BJ (cell line): ENCODE measurements at regions of chr6 and their contacts with region 1.

Region 1: GRCh38 chr6:132483779-132484679 is 28.9 kb downstream of the STX7 start:
- DNase-seq: no peak
- H3K4me3 ChIP-seq: no peak overlapping the region
- H3K27me3 ChIP-seq: no peaks in the 10 kb centered on the region
- CTCF ChIP-seq: peak; percentile 57

Region 2: DNA sequence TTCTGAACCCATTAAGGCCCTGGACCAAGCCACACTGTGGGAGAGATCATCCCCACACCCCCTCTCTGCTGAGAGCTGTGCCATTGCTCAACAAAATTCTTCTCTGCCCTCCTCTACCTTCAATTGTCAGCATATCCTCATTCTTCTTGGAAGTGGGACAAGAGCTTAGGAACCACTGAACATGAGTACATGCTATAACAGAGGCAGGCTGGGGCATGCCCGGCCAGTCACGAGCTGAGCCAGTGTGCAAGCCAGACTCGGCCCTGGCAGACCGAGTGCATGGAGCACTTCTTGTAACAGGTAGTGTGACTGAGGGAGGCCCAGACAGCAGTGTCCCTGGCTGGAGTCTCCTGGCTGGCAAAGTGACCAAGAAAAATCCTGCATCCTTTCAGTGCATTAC is 231.9 kb before region 1 on chr6:
- CTCF ChIA-PET with region 1: no interaction called
- POLR2A ChIA-PET with region 1: no interaction called
- DNase-seq: no peak
- H3K4me3 ChIP-seq: no peak overlapping the region
- H3K27me3 ChIP-seq: no peaks in the 10 kb centered on the region
- CTCF ChIP-seq: no peak

Region 3: DNA sequence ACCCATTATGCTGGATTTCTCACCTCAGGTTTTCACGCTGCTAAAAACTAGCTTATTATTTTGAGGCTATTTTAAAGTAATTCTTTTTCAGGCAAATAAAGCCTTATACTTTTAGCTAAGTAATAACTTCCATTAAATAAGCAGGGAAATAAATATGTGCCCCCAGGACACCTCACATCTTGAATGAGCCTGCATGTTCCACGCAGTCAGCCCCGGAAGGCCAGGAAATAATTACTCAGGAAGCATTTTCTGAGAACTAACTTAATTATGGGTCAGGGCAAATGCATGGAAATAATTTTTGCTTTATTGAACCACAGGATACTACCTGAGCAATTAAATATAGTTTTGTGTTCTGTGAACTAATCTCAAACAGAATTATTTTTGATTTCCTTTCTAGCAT is 12.2 kb before region 1 on chr6:
- CTCF ChIA-PET with region 1: interaction called, 12 read pairs
- POLR2A ChIA-PET with region 1: no interaction called
- DNase-seq: no peak
- H3K4me3 ChIP-seq: no peak overlapping the region
- H3K27me3 ChIP-seq: no peaks in the 10 kb centered on the region
- CTCF ChIP-seq: no peak

Region 4: GRCh38 chr6:132495604-132496079 is 11.6 kb after region 1 on chr6:
- CTCF ChIA-PET with region 1: interaction called, 19 read pairs
- POLR2A ChIA-PET with region 1: no interaction called
- DNase-seq: no peak
- H3K4me3 ChIP-seq: no peak overlapping the region
- H3K27me3 ChIP-seq: no peaks in the 10 kb centered on the region
- CTCF ChIP-seq: no peak

Region 5: DNA sequence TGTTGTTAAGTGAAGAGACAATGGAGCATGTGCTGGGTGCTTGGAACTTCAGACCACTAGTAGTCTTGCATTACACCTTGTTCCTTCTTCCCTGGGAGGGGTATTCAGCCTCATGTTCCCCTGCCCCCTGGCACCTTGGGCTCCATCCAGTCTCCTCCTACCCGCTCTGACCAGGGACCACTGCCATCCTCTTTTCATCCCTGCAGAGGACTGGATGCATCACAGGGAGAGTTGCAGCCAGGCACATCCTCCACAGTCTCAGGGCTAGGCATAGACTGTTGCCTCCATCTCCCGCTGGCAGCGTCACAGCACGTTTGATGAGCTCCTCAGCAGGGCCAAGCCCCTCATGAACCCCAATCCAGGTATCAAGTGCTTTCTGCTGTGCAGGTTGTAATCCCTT is 67.2 kb after region 1 on chr6:
- CTCF ChIA-PET with region 1: no interaction called
- POLR2A ChIA-PET with region 1: no interaction called
- DNase-seq: no peak
- H3K4me3 ChIP-seq: no peak overlapping the region
- H3K27me3 ChIP-seq: no peaks in the 10 kb centered on the region
- CTCF ChIP-seq: no peak